ENCODE measurements at regions of chr2 and their contacts with region 1.

Region 1: GRCh38 chr2:169141713-169142352 is 72.5 kb downstream of the DHRS9 start:
- DNase-seq: peak; percentile 83
- H3K4me3 Mint-ChIP-seq: no peak overlapping the region
- H3K27ac Mint-ChIP-seq: no peak overlapping the region
- H3K4me1 Mint-ChIP-seq: peaks cover 6% of the 10 kb centered on the region
- H3K27me3 Mint-ChIP-seq: no peaks in the 10 kb centered on the region
- CTCF ChIP-seq: peak; percentile 76

Region 2: DNA sequence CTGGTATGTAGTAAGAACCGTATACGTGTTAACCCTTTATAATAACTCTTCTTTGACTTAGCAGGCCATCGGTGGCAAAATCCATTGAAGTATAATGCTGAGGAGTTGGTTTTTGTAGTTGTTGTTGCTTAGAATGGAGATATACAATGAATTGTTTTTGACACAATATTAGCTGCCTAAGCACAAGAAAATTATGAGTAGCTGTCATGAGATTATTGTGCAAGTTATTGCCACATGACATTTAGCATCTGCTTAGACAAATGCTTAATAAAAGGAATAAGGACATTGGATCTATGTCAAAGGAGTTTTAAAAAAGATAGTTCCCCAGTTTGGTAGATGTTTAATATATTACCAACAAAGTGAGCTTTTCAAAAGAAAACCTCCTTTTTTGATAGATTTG is 170.6 kb before region 1 on chr2:
- CTCF ChIA-PET with region 1: interaction called, 14 read pairs
- POLR2A ChIA-PET with region 1: no interaction called
- intact Hi-C with region 1: no loop called
- DNase-seq: no peak
- H3K4me3 Mint-ChIP-seq: no peak overlapping the region
- H3K27ac Mint-ChIP-seq: no peak overlapping the region
- H3K4me1 Mint-ChIP-seq: no peaks in the 10 kb centered on the region
- H3K27me3 Mint-ChIP-seq: no peaks in the 10 kb centered on the region
- CTCF ChIP-seq: no peak

Region 3: GRCh38 chr2:169159686-169160085 is 17.9 kb after region 1 on chr2:
- CTCF ChIA-PET with region 1: interaction called, 39 read pairs
- POLR2A ChIA-PET with region 1: no interaction called
- intact Hi-C with region 1: no loop called
- DNase-seq: peak; percentile 16
- H3K4me3 Mint-ChIP-seq: no peak overlapping the region
- H3K27ac Mint-ChIP-seq: no peak overlapping the region
- H3K4me1 Mint-ChIP-seq: no peaks in the 10 kb centered on the region
- H3K27me3 Mint-ChIP-seq: peaks cover 22% of the 10 kb centered on the region
- CTCF ChIP-seq: no peak

Region 4: DNA sequence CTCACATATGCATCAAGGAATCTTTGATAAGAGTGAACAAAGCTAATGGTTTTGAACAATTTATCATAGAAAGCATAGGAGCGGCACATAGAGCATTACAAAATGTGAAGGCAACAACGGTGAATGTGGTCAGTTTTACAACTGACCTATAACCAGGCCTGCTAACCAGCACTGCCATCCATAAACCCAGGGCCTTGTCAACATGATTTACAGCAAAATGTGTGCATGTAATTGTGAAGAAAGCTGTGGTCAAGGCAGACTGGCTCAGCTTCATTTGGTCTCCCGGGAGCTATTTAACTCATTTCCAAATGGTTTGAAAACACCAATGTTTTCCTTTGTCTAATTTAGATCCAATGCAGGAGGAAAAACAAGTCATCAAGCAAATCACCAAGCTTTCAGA is 47.3 kb after region 1 on chr2:
- CTCF ChIA-PET with region 1: interaction called, 10 read pairs
- POLR2A ChIA-PET with region 1: no interaction called
- intact Hi-C with region 1: no loop called
- DNase-seq: no peak
- H3K4me3 Mint-ChIP-seq: no peak overlapping the region
- H3K27ac Mint-ChIP-seq: no peak overlapping the region
- H3K4me1 Mint-ChIP-seq: no peaks in the 10 kb centered on the region
- H3K27me3 Mint-ChIP-seq: peaks cover 43% of the 10 kb centered on the region
- CTCF ChIP-seq: no peak

Region 5: GRCh38 chr2:169260246-169260645 is 118.4 kb after region 1 on chr2:
- CTCF ChIA-PET with region 1: no interaction called
- POLR2A ChIA-PET with region 1: no interaction called
- intact Hi-C with region 1: no loop called
- DNase-seq: peak; percentile 5
- H3K4me3 Mint-ChIP-seq: no peak overlapping the region
- H3K27ac Mint-ChIP-seq: no peak overlapping the region
- H3K4me1 Mint-ChIP-seq: no peaks in the 10 kb centered on the region
- H3K27me3 Mint-ChIP-seq: peaks cover 61% of the 10 kb centered on the region
- CTCF ChIP-seq: no peak

Measured in MCF 10A (cell line).